Posterior vena cava (tissue), 2 donors: ENCODE measurements at regions of chr2 and their contacts with region 1.

Region 1: GRCh38 chr2:127695491-127696472 is 5.5 kb upstream of the SFT2D3 start:
- DNase-seq: peak; percentile 91

Region 2: GRCh38 chr2:127508631-127509034 is 187.1 kb before region 1 on chr2:
- intact Hi-C with region 1: loop called in 1 of 2 experiments (anchors 10 kb)
- DNase-seq: peak; percentile 90

Region 3: DNA sequence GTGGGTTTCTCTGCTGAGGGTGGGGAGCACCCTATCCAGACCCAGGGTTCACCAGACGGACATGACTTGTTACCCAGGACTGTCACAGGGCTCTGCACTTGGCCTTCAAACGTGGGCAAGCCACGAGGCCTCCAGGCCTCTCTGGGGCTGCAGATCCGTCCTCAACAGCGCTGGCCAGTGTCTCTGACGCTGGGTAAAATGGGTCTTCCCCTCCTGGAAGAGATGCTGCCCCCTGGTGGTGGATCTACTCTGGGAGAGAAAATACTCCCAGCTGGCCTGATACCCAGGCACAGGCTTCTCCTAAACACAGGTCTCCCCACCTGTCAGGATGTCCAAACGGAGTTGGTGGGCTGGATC is 46.1 kb before region 1 on chr2:
- intact Hi-C with region 1: loop called in 1 of 2 experiments (anchors 5 kb)
- DNase-seq: peak; percentile 95

Region 4: DNA sequence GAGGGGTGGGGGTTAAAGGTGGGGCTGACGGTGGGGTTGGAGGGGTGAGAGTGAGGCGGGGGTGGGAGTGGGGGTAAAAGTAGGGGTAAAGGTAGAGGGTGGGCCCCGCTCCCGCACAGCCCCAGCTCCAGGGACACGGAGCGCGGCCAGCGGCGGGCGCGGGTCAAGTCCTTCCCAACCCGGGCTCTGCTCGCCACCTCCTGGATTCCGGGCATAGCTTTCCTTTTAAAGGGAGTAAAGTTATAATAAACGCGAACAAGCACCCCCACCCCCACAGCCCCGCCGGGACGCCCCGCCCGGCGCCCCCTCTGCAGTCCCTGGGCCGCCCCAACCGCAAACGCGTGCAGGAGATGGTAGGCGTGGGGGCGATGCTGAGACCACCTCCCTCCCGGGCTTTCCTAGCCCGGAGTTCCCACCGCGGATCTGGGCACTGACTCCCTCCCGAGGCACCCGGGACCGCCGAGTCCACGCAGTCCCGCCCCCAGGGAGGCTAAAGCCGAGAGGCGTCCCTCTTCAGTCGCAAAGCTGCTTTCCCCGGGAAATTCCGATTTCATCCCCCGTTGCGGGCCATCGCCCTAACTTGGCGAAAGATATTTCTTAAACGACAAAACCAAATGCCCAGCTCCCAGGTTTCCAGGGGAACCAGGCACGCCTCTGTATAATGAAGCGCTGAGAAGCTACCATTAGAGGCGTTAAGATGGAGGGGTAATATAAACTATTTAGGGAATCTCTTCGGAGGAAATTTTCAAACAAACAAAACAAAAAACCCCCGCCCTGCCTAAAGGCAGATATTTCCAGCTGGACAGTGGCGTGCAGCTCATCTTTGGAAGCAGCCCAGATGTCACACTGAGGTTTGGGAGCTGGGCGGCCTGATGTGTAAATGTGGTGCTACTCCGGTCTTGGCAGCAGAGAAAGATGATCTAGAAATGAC is 20.2 kb before region 1 on chr2 and contains the start of gene LIMS2:
- intact Hi-C with region 1: no loop called
- DNase-seq: peak; percentile 88
- total RNA-seq, gene LIMS2: 210 to 235 TPM